OCI-LY7 (cell line): ENCODE measurements at regions of chr6 and their contacts with region 1.

Region 1: DNA sequence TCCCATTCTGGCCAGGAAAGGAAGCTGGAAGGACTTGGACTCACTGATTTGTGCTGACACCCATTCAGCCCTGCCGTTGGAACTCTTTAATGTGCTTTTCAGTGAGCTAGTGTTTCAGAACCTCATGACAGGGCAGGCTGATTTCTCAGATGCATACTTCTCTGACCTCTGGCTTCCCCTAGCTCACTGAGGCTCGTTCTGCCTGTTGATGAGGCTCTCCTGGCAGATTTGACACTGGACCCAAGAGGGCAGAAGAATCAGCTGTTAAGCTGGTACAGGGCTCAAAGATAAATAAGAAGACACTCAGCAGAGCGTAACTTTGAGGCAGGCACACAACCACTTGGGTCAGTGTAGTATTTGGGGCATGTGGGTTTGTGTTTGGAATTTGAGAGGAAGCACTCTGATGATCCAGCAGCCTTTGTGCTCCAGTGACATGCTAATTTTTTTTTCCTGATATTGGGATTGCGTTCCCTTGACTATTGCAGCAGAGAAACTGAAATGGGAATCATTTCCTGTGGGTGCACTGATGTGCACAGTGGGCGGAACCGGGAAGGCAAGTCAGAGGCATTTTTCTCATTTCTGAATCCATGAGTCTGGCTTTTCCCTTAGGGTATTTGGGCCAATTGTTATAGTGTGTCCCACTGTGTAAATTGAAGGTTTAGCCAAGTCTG is 80.2 kb downstream of the CARMIL1 start:
- DNase-seq: no peak
- H3K4me3 ChIP-seq: no peak overlapping the region
- H3K27ac ChIP-seq: no peak overlapping the region
- H3K4me1 ChIP-seq: peaks cover 59% of the 10 kb centered on the region
- CTCF ChIP-seq: no peak

Region 2: DNA sequence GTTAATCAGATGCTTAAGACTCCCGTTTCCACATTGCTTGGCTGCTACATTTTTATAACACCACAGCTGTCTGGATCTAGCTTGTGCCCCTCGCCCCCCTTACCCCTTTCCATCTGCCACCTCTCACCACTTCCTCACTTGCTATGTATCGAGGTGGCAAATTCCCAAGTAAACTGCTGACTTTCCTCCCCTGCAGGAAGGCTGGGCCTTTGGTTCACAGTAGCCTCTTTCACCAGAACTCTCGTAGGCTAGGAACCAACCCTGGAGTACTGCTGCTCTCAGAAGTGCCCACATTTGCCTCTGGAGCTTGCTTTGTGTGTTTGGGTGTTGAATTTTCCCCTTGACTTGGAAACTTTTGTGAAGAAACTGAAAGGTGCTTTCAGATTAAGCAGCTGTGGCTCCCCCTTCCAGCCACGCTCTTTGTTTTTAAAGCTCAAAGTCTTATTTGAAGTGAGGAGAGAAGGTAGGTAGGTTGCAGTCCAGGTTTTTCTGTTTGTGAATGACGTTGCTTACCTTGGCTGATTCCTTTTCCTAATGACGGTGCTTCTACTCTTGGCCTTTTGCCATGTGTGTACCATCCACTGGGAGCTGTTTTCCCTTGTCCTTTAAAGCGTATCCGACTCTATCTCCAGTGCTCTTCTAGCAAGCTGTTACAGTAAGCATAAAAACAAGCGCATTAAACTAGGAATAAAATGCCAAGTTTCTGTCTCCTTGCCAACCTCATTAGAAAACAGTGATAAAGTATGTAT is 10.3 kb after region 1 on chr6:
- CTCF ChIA-PET with region 1: no interaction called
- POLR2A ChIA-PET with region 1: interaction called, 68 read pairs
- intact Hi-C with region 1: no loop called
- DNase-seq: peak; percentile 59
- H3K4me3 ChIP-seq: peak overlapping the region; percentile 65
- H3K27ac ChIP-seq: peak overlapping the region; percentile 87
- H3K4me1 ChIP-seq: peaks cover 90% of the 10 kb centered on the region
- CTCF ChIP-seq: 0 out of 2 replicates have a peak, but pooled peaks have one; percentile 16

Region 3: DNA sequence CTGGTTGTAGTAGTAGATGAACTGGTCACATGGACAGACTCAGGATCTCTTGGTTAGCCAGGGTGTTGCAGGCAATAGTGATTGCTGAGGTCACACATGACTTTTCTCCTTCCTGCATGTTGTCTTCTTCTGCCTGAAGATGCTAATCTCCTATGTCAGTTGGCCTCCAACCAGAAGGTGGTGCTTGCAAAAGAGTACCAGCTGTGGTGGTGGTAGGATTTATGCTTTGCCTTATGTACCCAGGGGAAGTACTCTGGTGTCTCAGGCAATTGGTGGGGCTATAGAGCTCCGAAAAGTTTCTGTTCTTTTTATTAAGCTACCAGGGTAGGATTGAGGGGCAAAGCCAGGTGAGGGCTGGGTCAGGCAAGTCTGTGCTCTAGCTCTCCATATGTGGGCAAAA is 18.3 kb after region 1 on chr6:
- CTCF ChIA-PET with region 1: interaction called, 5 read pairs
- POLR2A ChIA-PET with region 1: interaction called, 75 read pairs
- intact Hi-C with region 1: no loop called
- DNase-seq: peak; percentile 92
- H3K4me3 ChIP-seq: peak overlapping the region; percentile 64
- H3K27ac ChIP-seq: peak overlapping the region; percentile 82
- H3K4me1 ChIP-seq: peaks cover 76% of the 10 kb centered on the region
- CTCF ChIP-seq: peak; percentile 83